PC-9 (cell line): ENCODE measurements at regions of chr1 and their contacts with region 1.

Region 1: DNA sequence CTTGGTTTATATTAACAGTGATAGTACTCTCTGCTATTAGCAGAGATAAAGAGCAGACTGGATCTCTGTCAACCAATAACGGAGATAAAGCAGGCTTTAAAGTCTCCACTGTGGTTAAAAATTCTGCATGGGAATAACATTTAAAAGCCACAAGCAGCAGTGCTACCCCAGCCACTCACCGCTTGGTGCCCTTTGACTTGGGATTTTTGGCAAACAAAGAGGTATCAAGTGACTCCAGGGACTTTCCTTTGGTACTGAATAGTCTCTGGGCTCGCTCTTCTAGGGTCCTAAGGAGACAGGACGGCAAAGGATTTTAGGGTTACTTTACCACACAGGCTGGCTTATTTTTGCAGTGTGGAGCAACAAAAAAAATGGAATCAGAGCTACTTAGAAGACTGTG is 11.3 kb downstream of the SF3A3 start:
- DNase-seq: no peak
- H3K4me3 ChIP-seq: no peak overlapping the region
- H3K27ac ChIP-seq: no peak overlapping the region
- H3K4me1 ChIP-seq: no peaks in the 10 kb centered on the region
- H3K27me3 ChIP-seq: no peaks in the 10 kb centered on the region
- CTCF ChIP-seq: no peak

Region 2: GRCh38 chr1:38834937-38835827 is 856.6 kb after region 1 on chr1:
- CTCF ChIA-PET with region 1: interaction called, 11 read pairs
- POLR2A ChIA-PET with region 1: no interaction called
- intact Hi-C with region 1: no loop called
- DNase-seq: peak; percentile 51 to 73
- H3K4me3 ChIP-seq: no peak overlapping the region
- H3K27ac ChIP-seq: no peak overlapping the region
- H3K4me1 ChIP-seq: no peaks in the 10 kb centered on the region
- H3K27me3 ChIP-seq: peaks cover 24% of the 10 kb centered on the region
- CTCF ChIP-seq: peak; percentile 89